ENCODE measurements at regions of chr1 and their contacts with region 1.

Region 1: DNA sequence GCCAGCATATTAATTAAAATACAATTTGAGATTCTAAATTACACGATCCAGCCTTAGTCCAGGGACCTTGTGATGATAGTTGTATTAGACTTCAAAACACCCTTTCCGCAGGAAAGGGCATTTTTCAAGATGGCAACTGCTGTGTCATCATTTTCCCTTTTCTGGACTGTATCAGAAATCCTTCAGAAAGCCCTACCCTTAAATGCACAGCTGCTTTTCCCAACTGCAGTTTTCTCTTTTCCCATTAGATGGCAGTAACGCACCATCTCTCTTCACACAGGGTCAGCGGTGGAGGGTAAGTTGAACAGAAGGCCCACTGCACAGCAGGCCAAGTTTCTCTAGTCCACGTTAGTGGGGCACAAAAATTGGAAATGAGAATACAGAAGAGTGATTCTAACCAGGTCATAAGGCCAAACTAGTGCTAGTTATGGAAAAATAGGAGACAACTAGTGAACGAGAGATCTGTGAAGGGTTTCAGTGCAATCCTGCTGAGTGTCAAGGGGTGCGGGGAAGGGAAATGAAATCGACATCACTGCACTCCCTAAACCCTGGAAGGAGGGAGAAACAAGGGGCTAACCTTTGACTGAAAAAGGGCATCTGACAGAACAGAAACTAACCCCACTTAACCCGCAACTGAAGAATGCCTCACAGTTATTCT is 22.1 kb upstream of the TDRD10 start:
- DNase-seq: peak; percentile 65 to 71
- H3K4me3 ChIP-seq: no peak overlapping the region
- H3K27ac ChIP-seq: no peak overlapping the region
- H3K4me1 ChIP-seq: 0 out of 2 replicates have a peak, but pooled peaks cover 12% of the 10 kb centered on the region
- H3K27me3 ChIP-seq: no peaks in the 10 kb centered on the region
- CTCF ChIP-seq: peak; percentile 97

Region 2: DNA sequence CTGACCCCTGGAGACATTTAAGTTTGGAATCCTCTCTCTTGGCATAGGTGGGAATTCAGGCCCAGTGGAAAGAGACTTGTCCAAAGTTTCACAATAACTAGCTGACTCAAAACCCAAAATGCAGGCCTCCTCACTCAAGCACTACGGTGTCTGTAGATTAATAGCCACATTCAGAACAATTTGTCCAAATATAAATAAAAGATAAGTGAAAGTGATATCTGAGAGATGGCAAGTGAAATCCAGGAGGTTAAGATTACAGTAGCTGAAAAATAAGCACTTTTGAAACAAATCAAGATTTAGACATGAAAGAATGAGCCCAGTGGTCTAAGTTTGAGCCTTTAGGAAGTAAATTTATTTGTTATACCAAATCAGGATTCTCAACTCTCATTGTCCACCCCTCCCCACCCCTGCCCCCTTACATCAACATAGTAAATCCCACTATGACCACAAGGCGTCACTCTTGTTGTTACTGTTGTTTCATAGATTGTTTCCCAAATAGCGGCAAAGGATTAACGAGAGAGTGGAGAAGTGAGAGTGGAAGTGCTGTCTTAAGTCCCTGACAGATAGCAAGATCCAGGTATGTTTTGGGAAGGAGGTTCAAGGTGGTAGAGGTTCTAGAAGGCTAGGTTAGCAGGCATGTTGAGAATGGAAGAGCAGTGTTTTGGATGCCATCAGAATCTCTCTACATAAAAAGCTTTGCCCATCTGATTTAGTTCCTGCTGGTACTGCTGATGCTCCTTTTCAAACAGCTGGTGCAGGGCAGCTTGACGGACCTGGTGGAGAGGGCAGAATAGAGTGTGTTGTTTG is 280.9 kb before region 1 on chr1:
- CTCF ChIA-PET with region 1: interaction called, 15 read pairs
- POLR2A ChIA-PET with region 1: no interaction called
- intact Hi-C with region 1: loop called (anchors 5 kb)
- DNase-seq: no peak
- H3K4me3 ChIP-seq: no peak overlapping the region
- H3K27ac ChIP-seq: no peak overlapping the region
- H3K4me1 ChIP-seq: no peaks in the 10 kb centered on the region
- H3K27me3 ChIP-seq: peaks cover 9% of the 10 kb centered on the region
- CTCF ChIP-seq: peak; percentile 74

Region 3: DNA sequence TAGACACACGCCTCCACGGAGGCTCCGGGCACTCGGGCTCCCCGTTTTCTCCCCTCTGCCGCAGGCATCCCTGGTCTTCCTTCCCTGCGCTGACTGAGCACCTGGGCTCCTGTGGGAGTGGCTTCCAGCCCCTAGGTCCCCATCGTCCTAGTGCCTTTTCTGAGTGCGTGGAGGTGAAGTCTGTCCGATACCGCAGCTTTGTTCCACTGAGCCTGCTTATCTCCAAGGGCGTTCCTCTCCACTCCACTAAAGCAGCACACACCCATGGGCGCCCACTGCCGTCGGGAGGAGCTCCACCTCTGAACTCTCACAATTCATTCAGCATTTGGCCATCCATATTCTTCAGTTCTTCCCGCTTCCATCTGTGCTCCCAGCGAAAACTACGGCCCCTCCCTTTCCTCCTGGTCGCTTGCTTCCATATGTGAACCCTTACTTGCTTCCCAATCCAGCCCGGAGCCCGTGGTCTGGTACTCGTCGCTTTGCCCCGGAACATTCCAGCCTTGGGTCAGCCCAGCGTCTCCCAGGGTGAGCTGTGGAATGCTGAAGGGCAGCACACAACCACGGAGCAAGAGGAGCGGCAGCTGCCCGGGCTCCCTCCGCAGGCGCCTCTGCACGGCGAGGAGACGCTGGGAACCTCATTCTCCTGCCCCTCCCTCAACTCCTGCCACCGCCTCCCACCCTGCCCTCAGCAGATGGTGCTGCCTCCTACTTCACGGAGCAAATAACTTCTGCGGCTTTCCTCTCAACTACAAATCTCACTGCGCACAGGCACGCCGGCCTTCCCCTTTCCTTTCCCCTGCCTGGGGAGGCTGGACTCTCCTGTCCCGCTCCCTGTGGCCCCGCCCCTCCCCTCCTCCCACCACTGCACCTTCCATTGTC is 127.1 kb before region 1 on chr1:
- CTCF ChIA-PET with region 1: no interaction called
- POLR2A ChIA-PET with region 1: no interaction called
- intact Hi-C with region 1: loop called (anchors 2 kb)
- DNase-seq: peak in 1 of 2 experiments; percentile 52
- H3K4me3 ChIP-seq: peak overlapping the region; percentile 27; the same call in 1 of the 2 replicates
- H3K27ac ChIP-seq: no peak overlapping the region
- H3K4me1 ChIP-seq: no peaks in the 10 kb centered on the region
- H3K27me3 ChIP-seq: peaks cover 45% of the 10 kb centered on the region
- CTCF ChIP-seq: no peak

Region 4: DNA sequence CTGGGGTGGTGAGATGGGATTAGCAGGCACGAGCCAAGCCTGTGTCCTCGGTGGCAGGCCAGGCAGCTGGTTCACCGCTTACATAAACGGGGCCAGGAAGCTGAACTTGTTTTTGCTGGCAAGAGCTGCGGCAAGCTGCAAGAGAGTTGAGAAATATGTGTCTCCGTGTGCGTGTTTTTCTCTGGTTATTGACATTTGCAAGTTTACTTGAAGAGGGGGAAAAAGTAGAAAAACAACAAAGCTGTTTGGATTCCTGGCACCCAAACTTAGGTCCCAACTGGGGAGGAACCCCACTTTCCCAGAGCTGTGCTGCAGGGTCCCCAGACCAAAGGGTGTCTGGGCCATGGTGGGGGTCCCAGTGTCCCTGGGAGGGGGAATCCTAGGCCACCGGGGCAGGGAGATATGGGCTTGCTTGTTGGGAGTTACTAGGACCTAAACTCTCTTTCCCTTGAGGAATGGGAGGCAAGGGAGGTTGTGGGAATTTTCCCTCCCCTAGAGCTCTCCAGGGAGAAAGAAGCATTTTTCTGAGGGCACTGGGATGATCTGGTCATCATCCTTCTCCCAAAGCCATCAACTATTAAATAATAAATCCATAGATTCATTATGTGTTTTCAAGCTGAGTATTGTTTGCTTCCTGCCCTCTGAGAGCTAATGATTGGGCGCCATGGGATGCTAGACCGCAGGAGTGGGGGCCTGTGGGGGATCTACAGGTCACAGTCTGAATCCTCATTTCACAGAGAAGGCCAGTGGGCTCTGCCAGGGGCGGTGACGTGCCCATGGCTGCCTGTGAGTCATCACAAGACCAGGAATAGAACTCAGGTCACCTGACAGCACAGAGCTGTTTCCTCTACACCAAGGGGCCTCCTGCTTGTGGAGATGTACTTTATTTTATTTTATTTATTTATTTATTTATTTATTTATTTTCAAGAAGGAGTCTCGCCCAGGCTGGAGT is 60.0 kb before region 1 on chr1:
- CTCF ChIA-PET with region 1: interaction called, 3 read pairs
- POLR2A ChIA-PET with region 1: interaction called, 4 read pairs
- intact Hi-C with region 1: loop called (anchors 2 kb)
- DNase-seq: peak; percentile 63 to 85
- H3K4me3 ChIP-seq: no peak overlapping the region
- H3K27ac ChIP-seq: peak overlapping the region; percentile 66
- H3K4me1 ChIP-seq: peaks cover 52% of the 10 kb centered on the region
- H3K27me3 ChIP-seq: no peaks in the 10 kb centered on the region
- CTCF ChIP-seq: no peak

Region 5: DNA sequence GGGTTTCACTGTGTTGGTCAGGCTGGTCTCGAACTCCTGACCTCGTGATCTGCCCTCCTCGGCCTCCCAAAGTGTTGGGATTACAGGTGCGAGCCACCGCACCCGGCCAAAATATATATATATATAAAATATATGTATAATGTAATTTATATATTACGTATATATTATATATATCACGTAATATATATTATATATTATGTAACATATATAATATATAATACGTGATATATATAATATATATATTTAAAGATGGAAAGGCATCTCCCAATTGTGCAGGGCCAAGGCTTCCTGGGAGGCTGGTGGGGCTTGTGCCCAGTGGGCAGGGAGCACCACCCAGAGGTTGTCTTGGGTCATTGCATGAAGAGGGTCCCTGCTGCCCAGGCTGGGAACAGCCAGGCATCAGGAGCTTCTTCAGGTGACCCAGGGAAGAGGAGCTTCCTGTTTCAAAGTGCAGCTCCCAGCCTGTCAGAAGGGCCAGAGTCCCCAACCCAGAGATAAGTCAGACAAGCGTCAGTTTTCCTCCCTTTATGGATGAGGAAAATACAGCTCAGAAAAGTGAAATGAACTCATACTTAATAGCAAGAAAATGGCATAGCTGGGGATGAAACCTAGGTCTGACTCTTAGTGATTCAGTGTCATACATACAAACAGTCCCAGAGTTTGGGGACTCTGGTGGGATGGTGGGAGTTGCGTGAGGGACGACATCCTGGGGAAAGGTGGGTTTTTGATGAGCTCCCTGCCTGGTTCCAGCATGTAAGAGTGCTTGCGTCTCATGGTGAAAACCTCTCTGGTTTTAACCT is 66.6 kb after region 1 on chr1:
- CTCF ChIA-PET with region 1: interaction called, 12 read pairs
- POLR2A ChIA-PET with region 1: no interaction called
- intact Hi-C with region 1: loop called (anchors 1 kb)
- DNase-seq: peak; percentile 39 to 66
- H3K4me3 ChIP-seq: no peak overlapping the region
- H3K27ac ChIP-seq: no peak overlapping the region
- H3K4me1 ChIP-seq: no peaks in the 10 kb centered on the region
- H3K27me3 ChIP-seq: peaks cover 33% of the 10 kb centered on the region
- CTCF ChIP-seq: peak; percentile 85

Measured in PC-9 (cell line).